ENCODE measurements at regions of chr11 and their contacts with region 1.

Region 1: GRCh38 chr11:126318574-126319373 is 14.9 kb downstream of the DCPS start:
- DNase-seq: peak; percentile 65 to 90 (median 86)
- H3K4me3 ChIP-seq: peak overlapping the region in 4 of 7 experiments; percentile 25 to 50 (median 40)
- H3K27ac ChIP-seq: peak overlapping the region in 1 of 2 experiments; percentile 72
- H3K4me1 ChIP-seq: peaks cover 18 to 53% (median 35%) of the 10 kb centered on the region in 4 experiments
- H3K27me3 ChIP-seq: no peaks in the 10 kb centered on the region

Region 2: GRCh38 chr11:125916683-125917347 is 402.0 kb before region 1 on chr11:
- CTCF ChIA-PET with region 1: no interaction called
- POLR2A ChIA-PET with region 1: no interaction called
- DNase-seq: no peak
- H3K4me3 ChIP-seq: no peak overlapping the region
- H3K27ac ChIP-seq: no peak overlapping the region
- H3K4me1 ChIP-seq: no peaks in the 10 kb centered on the region
- H3K27me3 ChIP-seq: peaks cover 0 to 8% (median 7%) of the 10 kb centered on the region in 5 experiments

Region 3: GRCh38 chr11:126282736-126283591 is 35.8 kb before region 1 on chr11 and contains the start of gene TIRAP:
- CTCF ChIA-PET with region 1: no interaction called
- POLR2A ChIA-PET with region 1: no interaction called
- DNase-seq: peak in 2 of 3 donors; percentile 71 to 79
- H3K4me3 ChIP-seq: peak within 1 kb of the TSS; percentile 71 to 92 (median 83)
- H3K27ac ChIP-seq: peak within 1 kb of the TSS; percentile 33 to 82
- H3K4me1 ChIP-seq: peaks cover 2 to 37% (median 30%) of the 10 kb centered on the region in 4 experiments
- H3K27me3 ChIP-seq: no peaks in the 10 kb centered on the region

Region 4: GRCh38 chr11:126329644-126330211 is 11.0 kb after region 1 on chr11:
- CTCF ChIA-PET with region 1: interaction called, 10 read pairs
- POLR2A ChIA-PET with region 1: interaction called, 4 read pairs
- DNase-seq: no peak
- H3K4me3 ChIP-seq: no peak overlapping the region
- H3K27ac ChIP-seq: no peak overlapping the region
- H3K4me1 ChIP-seq: peaks cover 0 to 19% (median under 1%) of the 10 kb centered on the region in 4 experiments
- H3K27me3 ChIP-seq: no peaks in the 10 kb centered on the region

Region 5: GRCh38 chr11:126341760-126342161 is 23.0 kb after region 1 on chr11:
- CTCF ChIA-PET with region 1: interaction called, 10 read pairs
- POLR2A ChIA-PET with region 1: interaction called, 4 read pairs
- DNase-seq: peak in 2 of 3 donors; percentile 64 to 73
- H3K4me3 ChIP-seq: no peak overlapping the region
- H3K27ac ChIP-seq: peak overlapping the region in 1 of 2 experiments; percentile 3
- H3K4me1 ChIP-seq: peaks cover 3 to 80% (median 60%) of the 10 kb centered on the region in 4 experiments
- H3K27me3 ChIP-seq: no peaks in the 10 kb centered on the region

Measured in common myeloid progenitor, CD34-positive (primary cell).